ENCODE measurements at regions of chr7 and their contacts with region 1.

Region 1: DNA sequence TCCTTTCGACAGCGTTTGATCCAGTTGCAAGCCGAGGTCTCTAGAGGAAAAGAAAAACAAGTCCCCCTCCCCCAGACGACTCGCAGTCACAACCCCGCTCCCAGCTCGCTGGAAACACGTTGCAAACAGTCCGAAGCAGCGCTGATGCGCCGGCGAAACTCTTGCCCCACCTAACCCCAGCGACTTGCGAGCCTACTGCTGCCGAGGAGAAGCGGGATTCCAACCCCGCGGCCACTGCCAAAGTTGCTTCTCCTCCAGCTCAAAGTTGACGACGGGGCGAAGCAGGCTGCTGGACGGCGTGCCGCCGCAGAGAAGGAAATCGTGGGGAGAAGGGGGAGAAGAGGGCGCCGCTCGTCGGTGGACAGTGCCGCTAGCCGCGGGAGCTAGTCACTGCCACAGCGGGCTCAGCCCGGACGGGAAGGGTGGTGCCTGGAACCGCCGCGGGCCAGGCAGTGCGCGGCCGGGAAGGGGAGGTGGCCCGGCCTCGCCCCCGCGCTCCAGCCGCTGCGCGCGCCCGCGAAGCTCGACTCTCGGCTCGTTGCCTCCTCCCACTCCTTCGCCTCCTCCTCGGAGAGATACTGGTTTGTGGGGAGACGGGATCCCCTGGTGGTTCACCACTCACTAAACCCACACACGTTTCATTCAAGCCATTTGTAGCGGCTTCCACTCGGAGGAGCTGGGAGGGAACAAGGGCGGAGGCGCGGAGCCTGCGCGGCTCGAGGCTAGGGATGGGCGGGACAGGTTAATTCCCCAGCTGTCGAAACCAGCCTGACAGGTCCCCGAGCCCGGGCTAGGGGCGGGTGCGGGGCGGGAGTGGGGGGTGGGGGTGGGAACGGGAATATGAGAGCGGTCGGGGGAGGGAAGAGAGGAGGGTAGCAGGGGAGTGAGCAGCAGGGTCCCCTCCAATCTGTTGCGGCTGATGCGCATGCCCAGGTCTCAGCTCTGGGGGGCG is at the start of gene GPR37:
- DNase-seq: peak; percentile 81 to 96 (median 91)

Region 2: DNA sequence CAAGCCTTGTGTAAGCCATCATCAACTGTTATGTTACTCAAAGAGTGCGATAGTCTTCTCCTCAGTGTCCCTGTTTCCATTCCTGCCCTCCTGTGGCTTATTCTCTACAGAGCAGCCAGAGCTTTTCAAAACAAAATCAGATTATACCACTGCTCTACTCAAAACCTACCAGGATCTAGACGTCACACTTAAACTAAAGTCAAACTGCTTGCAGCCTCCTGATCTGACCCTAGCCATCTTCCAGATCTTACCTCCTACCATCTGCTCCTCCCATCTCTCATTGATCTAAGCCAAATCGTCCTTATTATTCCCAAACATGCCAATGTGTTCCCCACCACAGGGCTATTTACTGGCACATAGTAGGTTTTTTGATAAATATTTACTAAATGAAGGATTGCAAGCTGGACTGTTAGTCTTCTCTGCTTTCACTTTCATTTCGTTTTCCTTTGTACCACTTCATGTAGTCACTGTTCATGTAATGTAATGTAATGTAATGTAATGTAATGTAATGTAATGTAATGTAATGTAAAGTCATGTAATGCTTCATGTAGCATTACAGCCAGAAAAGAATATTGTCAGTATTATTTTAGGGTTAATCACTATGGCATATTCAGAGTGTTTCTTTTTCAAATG is 116.2 kb before region 1 on chr7:
- intact Hi-C with region 1: loop called (anchors 10 kb)
- DNase-seq: no peak

Measured in head of caudate nucleus (tissue), 42 donors.